ENCODE measurements at regions of chr10 and their contacts with region 1.

Region 1: GRCh38 chr10:30433730-30434272 is at the start of gene MAP3K8:
- DNase-seq: peak; percentile 90
- ATAC-seq: peak; percentile 71
- H3K4me3 Mint-ChIP-seq: peak within 1 kb of the TSS; percentile 95
- H3K27ac Mint-ChIP-seq: peak within 1 kb of the TSS; percentile 94
- H3K4me1 Mint-ChIP-seq: peaks cover 71% of the 10 kb centered on the region
- H3K27me3 Mint-ChIP-seq: no peaks in the 10 kb centered on the region
- CTCF ChIP-seq: no peak
- total RNA-seq, gene MAP3K8: 141 and 160 TPM in 2 replicates

Region 2: GRCh38 chr10:30413996-30414576 is 19.7 kb before region 1 on chr10:
- CTCF ChIA-PET with region 1: interaction called, 22 read pairs
- POLR2A ChIA-PET with region 1: interaction called, 427 read pairs
- intact Hi-C with region 1: loop called (anchors 1 kb)
- DNase-seq: no peak
- ATAC-seq: peak; percentile 67
- H3K4me3 Mint-ChIP-seq: no peak overlapping the region
- H3K27ac Mint-ChIP-seq: peak overlapping the region; percentile 73
- H3K4me1 Mint-ChIP-seq: peaks cover 45% of the 10 kb centered on the region
- H3K27me3 Mint-ChIP-seq: no peaks in the 10 kb centered on the region
- CTCF ChIP-seq: peak; percentile 70

Region 3: GRCh38 chr10:30456266-30456665 is 22.5 kb after region 1 on chr10:
- CTCF ChIA-PET with region 1: interaction called, 10 read pairs
- POLR2A ChIA-PET with region 1: interaction called, 35 read pairs
- intact Hi-C with region 1: loop called (anchors 2 kb)
- DNase-seq: no peak
- ATAC-seq: peak; percentile 63
- H3K4me3 Mint-ChIP-seq: peak overlapping the region; percentile 53
- H3K27ac Mint-ChIP-seq: peak overlapping the region; percentile 81
- H3K4me1 Mint-ChIP-seq: peaks cover 46% of the 10 kb centered on the region
- H3K27me3 Mint-ChIP-seq: no peaks in the 10 kb centered on the region
- CTCF ChIP-seq: no peak

Region 4: DNA sequence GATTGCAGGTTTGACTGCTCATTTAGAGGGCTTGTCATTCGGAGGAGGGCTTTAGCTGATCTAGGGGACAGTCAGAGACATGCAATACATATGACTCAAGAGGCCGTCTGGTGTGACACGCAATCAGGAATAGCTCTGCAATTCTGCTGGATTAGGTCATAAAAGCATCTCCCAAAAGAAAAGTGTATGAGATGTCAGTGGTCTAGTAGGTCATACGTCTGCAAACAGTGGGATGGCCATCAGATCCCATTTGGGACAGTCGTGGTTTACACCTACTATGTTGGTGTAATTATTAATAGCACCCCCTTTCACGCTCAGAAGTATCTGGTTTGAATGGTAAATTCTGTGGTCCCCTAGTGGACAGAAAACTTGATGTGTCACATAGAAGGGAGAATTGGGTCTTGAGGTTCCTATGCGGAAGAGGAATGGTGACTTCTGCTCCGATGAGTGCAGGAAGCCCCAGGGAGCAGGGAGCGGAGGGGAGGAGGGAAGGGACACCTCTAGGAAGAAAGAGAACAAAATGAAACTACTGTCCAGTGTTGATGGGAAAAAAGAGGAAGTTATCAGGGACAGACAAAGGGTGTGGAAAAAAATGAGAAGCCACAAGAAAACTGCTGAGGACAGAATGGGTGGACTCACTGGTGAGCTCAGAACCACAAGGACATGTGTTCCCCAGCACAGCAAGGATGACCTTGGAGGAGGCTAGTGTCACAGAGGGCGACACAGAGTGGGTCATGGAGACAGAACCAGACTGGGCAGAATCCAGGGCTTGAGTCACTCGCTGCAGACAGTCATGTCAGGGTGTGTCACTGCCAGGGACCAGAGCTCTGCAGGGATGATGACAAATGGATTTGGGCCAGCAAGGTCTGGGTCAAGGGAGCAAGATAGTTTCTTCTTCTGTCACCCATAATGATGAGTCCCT is 60.1 kb after region 1 on chr10:
- CTCF ChIA-PET with region 1: interaction called, 5 read pairs
- POLR2A ChIA-PET with region 1: interaction called, 22 read pairs
- intact Hi-C with region 1: loop called (anchors 1 kb)
- DNase-seq: no peak
- ATAC-seq: peak; percentile 53
- H3K4me3 Mint-ChIP-seq: peak overlapping the region; percentile 70
- H3K27ac Mint-ChIP-seq: peak overlapping the region; percentile 84
- H3K4me1 Mint-ChIP-seq: peaks cover 98% of the 10 kb centered on the region
- H3K27me3 Mint-ChIP-seq: no peaks in the 10 kb centered on the region
- CTCF ChIP-seq: no peak

Region 5: GRCh38 chr10:30529373-30529998 is 95.7 kb after region 1 on chr10:
- CTCF ChIA-PET with region 1: interaction called, 14 read pairs
- POLR2A ChIA-PET with region 1: interaction called, 140 read pairs
- intact Hi-C with region 1: loop called (anchors 1 kb)
- DNase-seq: peak; percentile 78
- ATAC-seq: peak; percentile 84
- H3K4me3 Mint-ChIP-seq: peak overlapping the region; percentile 86
- H3K27ac Mint-ChIP-seq: peak overlapping the region; percentile 98
- H3K4me1 Mint-ChIP-seq: peaks cover 76% of the 10 kb centered on the region
- H3K27me3 Mint-ChIP-seq: no peaks in the 10 kb centered on the region
- CTCF ChIP-seq: no peak

Region 6: DNA sequence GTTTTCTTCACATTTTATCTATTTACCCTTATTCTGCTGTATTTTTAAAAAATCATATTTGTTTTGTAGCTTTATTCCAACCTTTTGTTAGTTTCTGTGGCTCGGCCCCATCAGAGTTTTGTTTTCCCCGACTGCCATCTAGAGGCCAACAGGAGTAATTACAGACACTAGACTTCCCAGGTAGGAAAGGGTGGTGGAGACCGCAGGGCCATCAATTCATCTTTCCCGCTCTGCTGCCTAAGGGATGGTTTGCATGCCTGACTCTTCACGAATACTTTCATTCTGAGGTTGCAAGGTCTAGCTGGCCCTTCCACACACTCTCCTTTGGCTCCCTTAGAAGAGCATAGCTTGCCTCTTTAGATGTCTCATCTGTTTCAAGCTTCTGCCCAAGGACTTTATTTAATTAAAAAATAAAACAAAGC is 157.5 kb after region 1 on chr10:
- CTCF ChIA-PET with region 1: interaction called, 15 read pairs
- POLR2A ChIA-PET with region 1: interaction called, 4 read pairs
- intact Hi-C with region 1: loop called (anchors 1 kb)
- DNase-seq: no peak
- ATAC-seq: peak; percentile 23
- H3K4me3 Mint-ChIP-seq: no peak overlapping the region
- H3K27ac Mint-ChIP-seq: no peak overlapping the region
- H3K4me1 Mint-ChIP-seq: peaks cover 37% of the 10 kb centered on the region
- H3K27me3 Mint-ChIP-seq: peaks cover 9% of the 10 kb centered on the region
- CTCF ChIP-seq: peak; percentile 62

Region 7: GRCh38 chr10:32378363-32379317 is 1944.8 kb after region 1 on chr10:
- CTCF ChIA-PET with region 1: no interaction called
- POLR2A ChIA-PET with region 1: no interaction called
- intact Hi-C with region 1: loop called (anchors 5 kb)
- DNase-seq: peak; percentile 73
- ATAC-seq: peak; percentile 94
- H3K4me3 Mint-ChIP-seq: no peak overlapping the region
- H3K27ac Mint-ChIP-seq: no peak overlapping the region
- H3K4me1 Mint-ChIP-seq: peaks cover 21% of the 10 kb centered on the region
- H3K27me3 Mint-ChIP-seq: no peaks in the 10 kb centered on the region
- CTCF ChIP-seq: no peak

Measured in activated B cell treated with CpG ODN at 0.5 μM for 24 hours (primary cell).